Psoas muscle (tissue), 8 donors: ENCODE measurements at regions of chr9 and their contacts with region 1.

Region 1: DNA sequence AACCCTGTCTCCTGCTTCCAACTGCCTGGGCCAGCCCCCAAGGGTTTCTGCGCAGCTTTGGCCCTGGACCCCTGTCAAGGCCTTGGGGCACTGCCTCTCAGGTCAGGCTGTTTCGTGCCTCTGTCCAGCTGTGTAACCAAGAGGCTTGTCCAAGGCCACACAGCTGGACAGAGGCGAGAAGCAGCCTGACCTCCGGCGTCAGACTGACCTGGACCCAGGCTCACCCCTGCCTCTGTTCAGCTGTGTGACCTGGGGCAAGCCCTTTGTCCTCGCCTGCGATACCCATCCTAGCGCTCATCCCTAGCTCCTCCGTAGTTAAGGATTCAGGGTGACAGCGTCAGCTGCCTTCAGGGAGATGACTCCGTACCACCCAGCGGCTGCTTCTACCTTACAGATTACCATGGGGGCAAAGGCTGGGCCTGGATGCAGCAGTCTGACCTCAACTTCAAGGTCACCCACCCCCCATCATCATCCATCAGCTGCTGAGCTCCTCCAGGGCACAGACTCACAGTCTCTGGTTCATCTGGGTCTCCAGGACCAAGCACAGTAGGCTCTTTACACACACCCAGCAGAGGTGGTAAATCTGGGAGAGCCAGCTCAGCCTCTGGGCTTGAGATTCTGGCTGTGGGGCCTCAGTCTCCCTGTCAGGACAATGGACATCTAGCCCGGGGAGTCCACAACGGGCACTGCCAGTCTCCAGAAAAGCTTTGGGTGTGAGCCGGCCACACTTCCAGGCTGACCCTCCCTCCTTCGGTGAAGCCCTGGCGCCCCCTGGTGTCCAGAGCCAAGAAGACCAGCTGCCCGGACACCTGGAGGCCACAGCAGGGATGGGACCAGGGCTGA is 7.9 kb downstream of the AK1 start:
- DNase-seq: peak; percentile 91 to 96
- ATAC-seq: peak; percentile 76 to 85 (median 79)
- H3K4me3 ChIP-seq: no peak overlapping the region
- H3K27ac ChIP-seq: no peak overlapping the region
- H3K4me1 ChIP-seq: peaks cover 30% of the 10 kb centered on the region
- H3K27me3 ChIP-seq: no peaks in the 10 kb centered on the region
- CTCF ChIP-seq: peak; percentile 78

Region 2: DNA sequence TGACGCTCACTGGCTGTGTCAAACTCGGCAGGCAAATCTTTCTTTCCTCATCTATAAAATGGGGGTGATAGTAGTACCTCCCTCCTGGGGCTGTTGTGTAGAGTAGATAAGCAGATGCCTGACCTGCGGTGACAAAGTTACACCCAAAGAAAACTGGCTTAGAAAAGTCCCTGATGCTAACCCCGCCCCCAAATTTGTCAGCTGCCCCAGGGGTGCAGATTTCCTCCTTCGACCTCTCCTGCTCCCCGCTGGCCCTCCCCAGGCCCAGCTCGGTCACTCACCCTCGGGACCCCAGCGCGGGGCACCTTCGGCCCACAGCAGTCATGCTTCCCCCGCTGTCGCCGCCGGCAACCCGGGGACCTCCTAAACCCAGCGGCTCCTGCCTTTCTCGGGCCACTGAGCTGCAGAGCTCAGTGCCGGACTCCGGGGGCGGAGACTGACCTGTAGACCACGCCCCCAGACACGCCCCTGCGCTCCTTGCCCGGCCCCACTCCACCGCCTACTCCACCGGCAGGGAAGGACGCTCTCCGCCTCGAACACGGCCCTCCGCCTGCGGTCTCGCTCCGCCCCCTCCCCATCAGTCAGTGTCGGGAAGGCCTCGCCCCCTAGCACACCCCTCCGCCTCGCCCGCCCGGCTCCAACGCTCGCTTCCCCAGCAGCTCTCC is 98.5 kb before region 1 on chr9:
- intact Hi-C with region 1: no loop called
- DNase-seq: peak; percentile 98 to 99
- ATAC-seq: peak; percentile 97 to 98 (median 98)
- H3K4me3 ChIP-seq: peak overlapping the region; percentile 73
- H3K27ac ChIP-seq: peak overlapping the region; percentile 55
- H3K4me1 ChIP-seq: peaks cover 6% of the 10 kb centered on the region
- H3K27me3 ChIP-seq: no peaks in the 10 kb centered on the region
- CTCF ChIP-seq: no peak

Region 3: GRCh38 chr9:127802576-127803443 is 66.7 kb before region 1 on chr9 and contains the start of gene FPGS:
- intact Hi-C with region 1: loop called (anchors 5 kb)
- DNase-seq: peak; percentile 93 to 95
- ATAC-seq: peak; percentile 84 to 88 (median 86)
- H3K4me3 ChIP-seq: peak within 1 kb of the TSS; percentile 80
- H3K27ac ChIP-seq: peak within 1 kb of the TSS; percentile 95
- H3K4me1 ChIP-seq: peaks cover 24% of the 10 kb centered on the region
- H3K27me3 ChIP-seq: no peaks in the 10 kb centered on the region
- CTCF ChIP-seq: no peak
- total RNA-seq, gene FPGS: 39.7 to 61.9 (median 45.8) TPM

Region 4: GRCh38 chr9:127916665-127917613 is 47.4 kb after region 1 on chr9 and contains the start of gene ST6GALNAC4:
- intact Hi-C with region 1: loop called in 1 of 2 experiments (anchors 5 kb)
- DNase-seq: peak; percentile 95 to 97
- ATAC-seq: peak; percentile 91 to 92 (median 92)
- H3K4me3 ChIP-seq: peak within 1 kb of the TSS; percentile 73
- H3K27ac ChIP-seq: peak within 1 kb of the TSS; percentile 81
- H3K4me1 ChIP-seq: peaks cover 37% of the 10 kb centered on the region
- H3K27me3 ChIP-seq: no peaks in the 10 kb centered on the region
- CTCF ChIP-seq: no peak
- total RNA-seq, gene ST6GALNAC4: 8.9 to 52.6 (median 27.3) TPM